ENCODE measurements at regions of chr2 and their contacts with region 1.

Region 1: GRCh38 chr2:123916531-123916930 is 108.6 kb upstream of the CNTNAP5 start:
- DNase-seq: no peak
- ATAC-seq: no peak
- H3K4me3 ChIP-seq: no peak overlapping the region
- H3K27ac ChIP-seq: no peak overlapping the region
- H3K4me1 ChIP-seq: no peaks in the 10 kb centered on the region
- H3K27me3 ChIP-seq: no peaks in the 10 kb centered on the region
- CTCF ChIP-seq: no peak

Region 2: DNA sequence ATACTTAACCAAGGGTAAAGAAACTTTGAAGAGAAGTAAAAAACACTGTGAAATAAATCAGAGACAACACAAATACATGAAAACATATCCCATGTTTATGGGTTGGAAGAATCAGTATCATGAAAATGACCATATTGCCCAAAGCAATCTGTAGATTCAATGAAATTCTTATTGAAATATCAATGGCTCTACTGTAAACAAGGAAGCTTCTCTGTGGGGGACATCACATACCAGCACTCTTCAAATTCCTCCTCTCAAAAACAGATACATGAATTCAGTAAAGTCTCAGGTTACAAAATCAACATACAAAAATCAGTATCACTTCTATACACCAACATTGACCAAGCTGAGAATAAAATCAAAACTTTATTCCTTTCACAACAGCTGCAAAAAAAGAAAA is 45.0 kb after region 1 on chr2:
- intact Hi-C with region 1: loop called in 1 of 10 experiments (anchors 5 kb)
- DNase-seq: no peak
- ATAC-seq: no peak
- H3K4me3 ChIP-seq: no peak overlapping the region
- H3K27ac ChIP-seq: no peak overlapping the region
- H3K4me1 ChIP-seq: no peaks in the 10 kb centered on the region
- H3K27me3 ChIP-seq: no peaks in the 10 kb centered on the region
- CTCF ChIP-seq: no peak

Region 3: DNA sequence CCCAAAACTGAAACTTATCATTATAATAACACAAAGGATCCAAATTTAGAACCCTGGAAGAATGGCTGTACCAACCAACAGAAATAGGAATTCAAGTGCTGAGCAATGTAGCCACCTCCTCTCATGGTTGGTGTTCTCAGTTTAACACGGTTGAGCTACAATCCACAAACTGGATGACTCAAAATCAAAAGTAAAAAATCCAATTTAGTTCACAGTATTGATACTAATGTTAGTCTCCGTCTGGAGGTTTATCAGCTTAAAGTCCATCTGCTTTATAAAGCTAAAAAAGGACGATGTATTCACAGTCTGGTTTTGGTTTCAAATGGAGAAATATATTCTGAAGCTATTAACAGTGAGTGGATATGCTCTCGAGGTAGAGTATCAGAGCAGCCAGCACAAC is 149.1 kb after region 1 on chr2:
- intact Hi-C with region 1: no loop called
- DNase-seq: no peak
- ATAC-seq: no peak
- H3K4me3 ChIP-seq: no peak overlapping the region
- H3K27ac ChIP-seq: no peak overlapping the region
- H3K4me1 ChIP-seq: no peaks in the 10 kb centered on the region
- H3K27me3 ChIP-seq: no peaks in the 10 kb centered on the region
- CTCF ChIP-seq: no peak

Measured in heart right ventricle (tissue), 16 donors.